PC-9 (cell line): ENCODE measurements at regions of chr3 and their contacts with region 1.

Region 1: GRCh38 chr3:161028616-161029015 is 76.5 kb downstream of the B3GALNT1 start:
- DNase-seq: peak in 1 of 2 experiments; percentile 67
- H3K4me3 ChIP-seq: no peak overlapping the region
- H3K27ac ChIP-seq: no peak overlapping the region
- H3K4me1 ChIP-seq: peaks cover 24% of the 10 kb centered on the region
- H3K27me3 ChIP-seq: no peaks in the 10 kb centered on the region
- CTCF ChIP-seq: no peak

Region 2: DNA sequence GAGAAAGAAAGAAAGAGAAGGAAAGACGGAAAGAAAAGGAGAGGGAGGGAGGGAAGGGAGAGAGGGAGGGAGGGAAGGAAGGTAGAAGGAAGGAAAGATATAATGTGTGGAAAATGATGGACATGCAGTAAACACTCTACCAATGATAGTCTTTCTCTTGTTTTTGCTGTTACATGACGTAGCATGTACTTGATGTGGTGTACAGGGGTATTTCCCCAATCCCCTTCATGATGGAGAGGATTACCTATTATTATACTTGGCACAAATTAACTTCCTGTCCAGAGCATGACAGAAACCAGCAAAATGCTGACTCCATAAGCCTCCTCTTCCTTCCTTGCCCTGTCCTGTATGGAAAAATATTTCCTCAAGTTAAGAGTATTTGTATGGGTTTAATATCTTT is 47.9 kb before region 1 on chr3:
- CTCF ChIA-PET with region 1: no interaction called
- POLR2A ChIA-PET with region 1: no interaction called
- intact Hi-C with region 1: no loop called
- DNase-seq: no peak
- H3K4me3 ChIP-seq: no peak overlapping the region
- H3K27ac ChIP-seq: no peak overlapping the region
- H3K4me1 ChIP-seq: no peaks in the 10 kb centered on the region
- H3K27me3 ChIP-seq: no peaks in the 10 kb centered on the region
- CTCF ChIP-seq: no peak

Region 3: GRCh38 chr3:161038725-161039124 is 10.1 kb after region 1 on chr3:
- CTCF ChIA-PET with region 1: interaction called, 16 read pairs
- POLR2A ChIA-PET with region 1: no interaction called
- intact Hi-C with region 1: no loop called
- DNase-seq: no peak
- H3K4me3 ChIP-seq: no peak overlapping the region
- H3K27ac ChIP-seq: no peak overlapping the region
- H3K4me1 ChIP-seq: no peaks in the 10 kb centered on the region
- H3K27me3 ChIP-seq: no peaks in the 10 kb centered on the region
- CTCF ChIP-seq: no peak

Region 4: DNA sequence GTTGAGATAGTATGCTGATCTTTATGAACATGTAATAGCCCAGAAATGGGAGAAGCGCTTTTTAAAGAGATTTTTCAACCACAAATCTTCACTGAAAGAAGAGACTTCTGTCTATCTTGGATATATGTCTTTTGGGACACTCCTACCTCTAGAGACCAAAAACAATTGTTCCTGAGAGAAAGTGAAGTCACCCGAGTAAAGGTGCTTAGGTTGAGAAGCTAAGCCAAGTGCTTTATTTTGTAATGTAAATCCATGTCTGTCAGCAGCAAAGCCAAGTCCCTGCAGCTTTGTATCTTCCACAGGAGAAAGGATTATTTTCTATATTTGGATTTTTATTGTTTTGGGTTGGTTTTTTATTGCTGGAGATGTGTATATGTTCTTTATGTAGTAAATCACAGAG is 108.6 kb after region 1 on chr3:
- CTCF ChIA-PET with region 1: no interaction called
- POLR2A ChIA-PET with region 1: no interaction called
- intact Hi-C with region 1: no loop called
- DNase-seq: no peak
- H3K4me3 ChIP-seq: no peak overlapping the region
- H3K27ac ChIP-seq: no peak overlapping the region
- H3K4me1 ChIP-seq: peaks cover 21% of the 10 kb centered on the region; the same call in 1 of the 2 replicates
- H3K27me3 ChIP-seq: no peaks in the 10 kb centered on the region
- CTCF ChIP-seq: no peak